ACHN (cell line): ENCODE measurements at regions of chr1 and their contacts with region 1.

Region 1: GRCh38 chr1:36149237-36149972 is at the start of gene TRAPPC3:
- DNase-seq: peak; percentile 98

Region 2: DNA sequence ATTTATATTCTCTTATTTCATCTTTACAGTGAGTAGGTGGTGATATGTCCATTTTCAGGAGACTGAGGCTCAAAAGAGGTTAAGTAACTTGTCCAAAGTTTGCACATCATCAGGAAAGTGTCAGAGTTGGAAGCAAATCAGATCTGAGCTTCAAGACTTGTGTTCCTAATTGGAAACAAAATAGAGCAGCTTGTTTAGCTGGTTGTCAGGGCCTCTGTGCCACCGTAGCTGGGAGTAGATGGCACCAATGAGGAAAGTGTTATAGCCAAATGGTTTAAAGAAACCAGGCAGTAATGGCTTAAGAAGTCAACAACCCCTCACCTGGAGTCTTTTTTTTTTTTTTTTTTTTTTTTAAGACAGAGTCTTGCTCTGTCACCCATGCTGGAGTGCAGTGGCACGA is 246.7 kb before region 1 on chr1:
- in situ Hi-C with region 1: no loop called
- DNase-seq: no peak

Region 3: DNA sequence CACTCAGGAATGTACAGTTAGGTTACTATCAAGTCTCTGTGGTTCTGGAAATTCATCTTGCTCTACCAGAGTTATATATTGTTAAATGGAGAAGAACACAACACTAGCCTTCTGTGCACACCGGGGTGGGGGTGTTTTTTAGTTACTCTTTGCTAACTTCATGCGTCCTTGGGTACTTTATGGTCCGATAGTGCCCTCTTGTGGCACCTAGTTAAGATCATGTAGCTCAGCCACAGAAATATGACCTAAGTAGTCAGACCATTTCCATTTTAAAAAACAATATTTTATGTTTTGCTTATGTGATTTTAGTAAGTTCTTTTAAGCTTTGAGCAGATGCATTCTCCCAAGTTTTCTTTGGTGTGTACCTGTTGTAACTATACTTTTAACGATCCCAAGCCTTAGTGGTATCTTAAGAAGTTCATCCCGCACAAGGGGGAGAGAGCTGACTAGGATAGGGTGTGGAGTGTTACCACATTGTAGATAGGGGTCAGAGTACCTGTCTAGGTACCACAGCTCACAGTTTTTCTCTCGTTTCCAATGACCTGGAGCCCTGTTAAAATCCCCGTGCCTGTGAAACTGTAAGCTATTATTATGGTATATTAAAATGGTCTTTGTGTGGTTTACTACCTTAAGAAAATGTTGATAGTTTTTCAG is 136.2 kb after region 1 on chr1:
- in situ Hi-C with region 1: loop called (anchors 25 kb)
- DNase-seq: peak; percentile 78